ENCODE measurements at regions of chr16 and their contacts with region 1.

Region 1: GRCh38 chr16:28950648-28951409 is at the start of gene NFATC2IP:
- DNase-seq: peak; percentile 100
- ATAC-seq: peak; percentile 98
- H3K4me3 Mint-ChIP-seq: peak within 1 kb of the TSS; percentile 98
- H3K27ac Mint-ChIP-seq: peak within 1 kb of the TSS; percentile 89
- H3K4me1 Mint-ChIP-seq: peaks cover 24% of the 10 kb centered on the region
- H3K27me3 Mint-ChIP-seq: no peaks in the 10 kb centered on the region
- total RNA-seq, gene NFATC2IP: 69.2 to 72.7 TPM

Region 2: DNA sequence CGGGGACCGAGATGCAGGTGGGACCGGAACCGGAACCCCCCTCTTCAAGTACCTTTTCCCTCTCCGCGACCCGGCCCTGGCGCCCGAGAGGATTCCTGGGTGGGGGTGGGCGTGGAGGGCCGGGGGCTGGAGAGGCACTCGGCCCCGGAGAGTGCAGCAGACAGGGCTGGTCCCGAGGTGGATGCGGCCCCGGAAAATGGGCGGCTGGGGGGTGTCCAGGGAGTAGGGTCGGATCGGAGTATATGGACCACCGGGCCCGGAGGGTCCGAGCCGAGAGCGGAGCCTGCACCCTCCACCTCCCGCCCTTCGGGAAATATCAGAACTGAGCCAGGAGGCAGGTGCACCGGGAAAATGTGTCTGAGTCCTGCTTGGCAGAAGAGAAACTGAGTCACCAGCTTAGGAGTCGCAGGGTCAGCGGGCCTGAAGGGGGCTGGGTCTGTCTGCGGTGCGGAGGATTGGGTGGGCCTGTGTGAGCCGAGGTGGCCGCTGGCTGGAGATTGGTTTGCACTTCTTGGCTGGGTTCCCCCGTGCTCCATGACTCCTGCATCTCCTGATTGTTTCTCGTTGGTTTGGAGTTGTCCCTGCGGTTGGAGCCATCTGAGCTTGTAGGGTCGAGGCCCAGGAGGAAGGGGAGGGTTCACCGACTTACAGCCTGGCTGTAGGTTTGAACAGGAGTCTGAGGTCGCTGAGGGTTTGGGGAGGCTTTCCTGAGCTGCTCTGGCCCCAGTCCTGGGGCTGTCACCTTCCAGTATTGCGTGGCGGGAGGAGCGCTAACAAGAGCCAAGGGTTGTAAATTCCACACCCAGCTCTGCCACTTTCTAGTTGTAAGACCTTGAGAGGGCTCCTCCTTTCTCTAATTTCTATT is 86.7 kb before region 1 on chr16:
- CTCF ChIA-PET with region 1: interaction called, 7 read pairs
- POLR2A ChIA-PET with region 1: no interaction called
- intact Hi-C with region 1: loop called (anchors 1 to 5 kb)
- DNase-seq: peak; percentile 44
- ATAC-seq: no peak
- H3K4me3 Mint-ChIP-seq: peak overlapping the region; percentile 96
- H3K27ac Mint-ChIP-seq: peak overlapping the region; percentile 96
- H3K4me1 Mint-ChIP-seq: peaks cover 21% of the 10 kb centered on the region
- H3K27me3 Mint-ChIP-seq: no peaks in the 10 kb centered on the region

Region 3: DNA sequence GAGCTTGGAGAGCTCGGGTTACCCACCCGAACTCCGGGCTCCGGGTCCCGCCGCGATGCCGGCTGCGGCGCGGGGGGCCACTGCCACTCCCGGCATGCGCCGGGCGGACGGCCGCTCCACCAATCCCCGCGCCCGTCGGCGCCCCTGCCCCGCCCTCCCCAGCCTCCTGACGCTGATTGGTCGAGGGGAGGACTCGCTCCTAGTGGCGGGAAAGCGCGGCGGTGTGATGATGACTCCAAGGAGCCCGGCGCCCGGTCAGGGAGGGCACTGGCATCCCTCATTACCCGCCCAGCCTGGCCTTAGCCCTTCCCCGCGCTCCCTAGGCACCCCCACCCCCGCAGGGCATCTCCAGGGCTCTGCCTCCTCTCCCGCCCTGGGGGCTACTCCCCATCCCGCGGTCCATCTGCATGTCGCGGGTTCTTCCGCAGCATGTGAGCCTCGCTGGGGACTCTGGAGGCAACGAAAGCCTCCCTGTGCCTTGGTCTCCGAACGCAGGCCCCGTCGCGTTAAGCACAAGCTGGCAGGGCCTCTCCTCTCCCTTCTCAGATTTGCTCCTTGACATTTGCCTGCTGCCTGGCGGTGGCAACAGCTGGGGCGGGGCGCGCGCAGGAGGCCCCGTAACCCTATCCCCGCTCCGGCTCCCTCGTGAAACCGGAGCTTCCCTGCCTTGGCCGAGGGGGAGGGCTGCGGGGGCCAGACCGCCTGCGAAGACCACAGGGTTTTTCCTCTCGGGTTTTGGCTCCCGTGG is 70.8 kb before region 1 on chr16:
- CTCF ChIA-PET with region 1: interaction called, 23 read pairs
- POLR2A ChIA-PET with region 1: no interaction called
- intact Hi-C with region 1: loop called in 1 of 2 experiments (anchors 1 kb)
- DNase-seq: peak; percentile 97
- ATAC-seq: peak; percentile 97
- H3K4me3 Mint-ChIP-seq: peak overlapping the region; percentile 85
- H3K27ac Mint-ChIP-seq: peak overlapping the region; percentile 76
- H3K4me1 Mint-ChIP-seq: peaks cover 20% of the 10 kb centered on the region
- H3K27me3 Mint-ChIP-seq: peaks cover 7% of the 10 kb centered on the region

Region 4: DNA sequence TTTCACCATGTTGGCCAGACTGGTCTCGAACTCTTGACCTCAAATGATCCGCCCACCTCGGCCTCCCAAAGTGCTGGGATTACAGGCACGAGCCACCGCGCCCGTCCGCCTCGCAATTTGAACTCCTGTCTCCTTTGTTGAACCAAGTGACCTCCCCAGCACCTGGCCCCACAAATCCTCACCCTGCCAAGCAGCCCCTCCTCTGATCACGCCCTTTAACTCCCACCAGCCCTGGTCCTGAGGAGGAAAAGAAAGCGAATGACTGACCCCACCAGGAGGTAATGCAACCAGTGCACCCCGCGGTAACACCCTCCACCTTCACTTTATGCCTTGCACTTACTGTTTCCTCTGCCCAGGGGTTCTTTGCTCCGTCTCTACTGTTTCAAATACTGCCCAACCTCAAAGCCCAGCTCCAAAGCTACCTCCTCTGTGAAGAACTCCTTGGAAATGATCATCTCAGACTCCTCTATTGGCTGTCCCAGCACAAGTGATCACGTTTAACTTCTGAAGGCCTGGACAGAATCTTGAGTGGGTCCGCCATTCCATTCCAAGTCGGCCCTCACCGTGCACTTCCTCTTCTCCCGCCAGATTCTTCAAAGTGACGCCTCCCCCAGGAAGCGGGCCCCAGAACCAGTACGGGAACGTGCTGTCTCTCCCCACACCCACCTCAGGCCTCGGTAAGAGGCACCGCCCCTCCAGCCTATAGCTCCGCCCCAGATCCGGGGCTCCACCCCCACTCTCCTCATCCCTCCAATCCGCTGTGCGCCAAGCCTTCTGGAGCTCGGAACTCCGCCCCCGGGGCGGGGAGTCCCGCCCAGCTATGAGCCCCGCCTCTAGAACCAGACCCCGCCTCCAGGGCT is 14.7 kb before region 1 on chr16:
- CTCF ChIA-PET with region 1: interaction called, 34 read pairs
- POLR2A ChIA-PET with region 1: interaction called, 3 read pairs
- intact Hi-C with region 1: loop called (anchors 1 kb)
- DNase-seq: peak; percentile 95
- ATAC-seq: peak; percentile 100
- H3K4me3 Mint-ChIP-seq: peak overlapping the region; percentile 71
- H3K27ac Mint-ChIP-seq: peak overlapping the region; percentile 83
- H3K4me1 Mint-ChIP-seq: peaks cover 14% of the 10 kb centered on the region
- H3K27me3 Mint-ChIP-seq: no peaks in the 10 kb centered on the region

Region 5: GRCh38 chr16:28974437-28975157 is 23.8 kb after region 1 on chr16 and contains the start of gene SPNS1:
- CTCF ChIA-PET with region 1: interaction called, 5 read pairs
- POLR2A ChIA-PET with region 1: interaction called, 3 read pairs
- intact Hi-C with region 1: loop called in 1 of 2 experiments (anchors 1 kb)
- DNase-seq: peak; percentile 98
- ATAC-seq: peak; percentile 94
- H3K4me3 Mint-ChIP-seq: peak within 1 kb of the TSS; percentile 98
- H3K27ac Mint-ChIP-seq: peak within 1 kb of the TSS; percentile 93
- H3K4me1 Mint-ChIP-seq: peaks cover 30% of the 10 kb centered on the region
- H3K27me3 Mint-ChIP-seq: no peaks in the 10 kb centered on the region
- total RNA-seq, gene SPNS1: 12.7 to 14.2 TPM

Measured in activated CD4-positive, alpha-beta T cell treated with anti-CD3 and anti-CD28 coated beads for 36 hours (primary cell).